Left lung (tissue), 14 donors: ENCODE measurements at regions of chrX and their contacts with region 1.

Region 1: GRCh38 chrX:13487731-13488523 is 81.5 kb upstream of the EGFL6 start:
- DNase-seq: peak in 2 of 4 donors; percentile 56 to 73
- ATAC-seq: peak; percentile 87
- H3K4me3 ChIP-seq: no peak overlapping the region
- H3K27ac ChIP-seq: peak overlapping the region; percentile 76 to 77
- H3K4me1 ChIP-seq: peaks cover 0 to 19% of the 10 kb centered on the region in 2 donors
- H3K27me3 ChIP-seq: no peaks in the 10 kb centered on the region
- CTCF ChIP-seq: peak; percentile 30 to 55

Region 2: GRCh38 chrX:12946838-12947544 is 540.9 kb before region 1 on chrX:
- intact Hi-C with region 1: loop called in 1 of 2 experiments (anchors 5 kb)
- DNase-seq: peak in 3 of 4 donors; percentile 36 to 65 (median 62)
- ATAC-seq: peak; percentile 92
- H3K4me3 ChIP-seq: no peak overlapping the region
- H3K27ac ChIP-seq: peak overlapping the region; percentile 58
- H3K4me1 ChIP-seq: peaks cover 6 to 33% of the 10 kb centered on the region in 2 donors
- H3K27me3 ChIP-seq: no peaks in the 10 kb centered on the region
- CTCF ChIP-seq: peak; percentile 85 to 97

Region 3: DNA sequence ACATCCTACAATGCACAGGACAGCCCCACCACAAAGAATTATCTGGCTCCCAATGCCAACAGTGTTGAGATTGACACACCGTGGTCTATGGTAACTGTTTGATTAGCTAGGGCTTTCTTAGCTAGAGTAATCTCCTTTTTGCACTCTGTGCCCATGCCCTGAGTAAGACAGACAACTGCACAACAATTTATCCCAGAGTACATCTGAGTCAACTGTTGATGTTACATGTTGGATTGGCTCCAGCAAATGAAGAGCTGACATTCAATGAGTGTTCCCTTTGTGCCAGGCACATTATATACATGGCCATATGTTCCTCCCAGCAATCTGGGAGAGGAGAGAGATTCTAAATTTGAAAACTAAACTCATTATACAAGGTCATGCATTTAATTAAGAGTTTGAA is 439.6 kb before region 1 on chrX:
- intact Hi-C with region 1: no loop called
- DNase-seq: no peak
- ATAC-seq: no peak
- H3K4me3 ChIP-seq: no peak overlapping the region
- H3K27ac ChIP-seq: no peak overlapping the region
- H3K4me1 ChIP-seq: peaks cover 0 to 18% of the 10 kb centered on the region in 2 donors
- H3K27me3 ChIP-seq: no peaks in the 10 kb centered on the region
- CTCF ChIP-seq: no peak

Region 4: GRCh38 chrX:13334491-13334890 is 153.4 kb before region 1 on chrX:
- intact Hi-C with region 1: no loop called
- DNase-seq: no peak
- ATAC-seq: no peak
- H3K4me3 ChIP-seq: no peak overlapping the region
- H3K27ac ChIP-seq: no peak overlapping the region
- H3K4me1 ChIP-seq: no peaks in the 10 kb centered on the region
- H3K27me3 ChIP-seq: no peaks in the 10 kb centered on the region
- CTCF ChIP-seq: no peak

Region 5: DNA sequence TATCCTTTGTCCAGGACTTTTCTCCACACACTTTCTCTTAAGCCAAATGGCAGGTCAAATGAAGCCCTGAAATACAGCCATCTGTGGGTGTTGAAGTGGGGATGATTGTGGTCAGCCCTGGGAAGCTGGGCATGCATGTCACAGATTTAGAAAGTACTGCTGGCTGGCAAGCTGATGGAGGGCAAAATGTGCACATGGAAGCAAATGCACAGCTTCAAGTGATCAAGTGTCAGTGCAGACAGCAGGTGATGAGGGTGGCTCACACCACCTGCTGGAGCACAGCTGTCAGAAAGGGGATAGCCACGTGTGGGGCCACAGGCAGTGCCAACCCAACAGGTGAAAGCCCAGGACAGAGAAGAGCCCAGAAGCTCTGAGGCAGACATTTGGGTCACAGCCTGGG is 127.8 kb before region 1 on chrX:
- intact Hi-C with region 1: no loop called
- DNase-seq: no peak
- ATAC-seq: no peak
- H3K4me3 ChIP-seq: no peak overlapping the region
- H3K27ac ChIP-seq: no peak overlapping the region
- H3K4me1 ChIP-seq: no peaks in the 10 kb centered on the region
- H3K27me3 ChIP-seq: peaks cover 0 to 5% of the 10 kb centered on the region in 2 donors
- CTCF ChIP-seq: no peak

Region 6: DNA sequence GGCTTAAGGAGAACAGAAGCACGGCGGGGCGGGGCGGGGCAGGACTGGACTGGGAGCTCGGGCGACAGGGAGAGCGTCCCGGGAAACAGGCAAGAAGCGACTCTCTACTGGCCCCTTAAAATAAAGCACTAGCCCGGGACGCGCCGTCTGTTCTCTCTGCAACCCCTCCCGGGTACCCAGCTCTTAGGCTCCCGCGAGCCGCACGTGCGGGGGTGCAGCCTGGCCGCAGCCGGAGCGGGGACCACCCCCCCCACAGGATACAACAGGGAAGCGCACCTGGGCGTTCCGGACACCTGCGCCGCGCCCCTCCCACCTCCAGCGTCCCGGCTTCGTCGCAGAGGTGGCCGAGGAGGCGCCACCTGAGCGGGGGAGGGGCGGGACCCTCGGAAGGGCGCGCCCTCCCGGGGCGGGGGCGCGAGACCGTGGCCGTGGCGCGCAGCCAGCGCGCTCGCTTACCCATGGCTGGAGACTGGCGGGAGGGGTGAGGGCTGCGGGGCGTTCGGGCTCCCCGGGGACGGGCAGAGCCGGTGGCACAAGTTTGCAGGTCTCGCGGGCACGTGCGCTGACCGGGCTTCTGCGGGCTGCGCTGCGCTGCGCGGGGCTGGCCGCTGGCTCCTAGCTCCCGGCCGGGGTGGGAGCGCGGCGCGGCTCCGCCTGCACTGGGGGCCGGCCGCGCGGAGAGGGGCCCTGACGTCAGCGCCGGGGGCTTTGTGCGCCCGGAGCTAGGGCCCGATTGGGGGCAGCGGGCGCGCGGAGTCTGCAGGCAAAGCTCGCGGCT is 450.3 kb after region 1 on chrX:
- intact Hi-C with region 1: no loop called
- DNase-seq: peak in 2 of 4 donors; percentile 59 to 79
- ATAC-seq: peak; percentile 72
- H3K4me3 ChIP-seq: peak overlapping the region; percentile 41 to 45
- H3K27ac ChIP-seq: peak overlapping the region in 1 of 2 donors; percentile 23
- H3K4me1 ChIP-seq: no peaks in the 10 kb centered on the region
- H3K27me3 ChIP-seq: peaks cover 23 to 45% of the 10 kb centered on the region in 2 donors
- CTCF ChIP-seq: no peak